ENCODE measurements at regions of chr17 and their contacts with region 1.

Region 1: GRCh38 chr17:8016632-8017478 is 14.4 kb downstream of the GUCY2D start:
- DNase-seq: peak; percentile 87
- H3K4me3 Mint-ChIP-seq: peak overlapping the region; percentile 51
- H3K27ac Mint-ChIP-seq: peak overlapping the region; percentile 95
- H3K4me1 Mint-ChIP-seq: peaks cover 44% of the 10 kb centered on the region
- H3K27me3 Mint-ChIP-seq: no peaks in the 10 kb centered on the region
- CTCF ChIP-seq: peak; percentile 90

Region 2: GRCh38 chr17:7915611-7916382 is 101.1 kb before region 1 on chr17 and contains the start of gene RNF227:
- CTCF ChIA-PET with region 1: interaction called, 4 read pairs
- POLR2A ChIA-PET with region 1: interaction called, 11 read pairs
- intact Hi-C with region 1: loop called (anchors 1 kb)
- DNase-seq: peak; percentile 97
- H3K4me3 Mint-ChIP-seq: peak within 1 kb of the TSS; percentile 93
- H3K27ac Mint-ChIP-seq: peak within 1 kb of the TSS; percentile 95
- H3K4me1 Mint-ChIP-seq: peaks cover 26% of the 10 kb centered on the region
- H3K27me3 Mint-ChIP-seq: no peaks in the 10 kb centered on the region
- CTCF ChIP-seq: no peak
- total RNA-seq, gene RNF227: 5.6 and 7.4 TPM in 2 replicates

Region 3: DNA sequence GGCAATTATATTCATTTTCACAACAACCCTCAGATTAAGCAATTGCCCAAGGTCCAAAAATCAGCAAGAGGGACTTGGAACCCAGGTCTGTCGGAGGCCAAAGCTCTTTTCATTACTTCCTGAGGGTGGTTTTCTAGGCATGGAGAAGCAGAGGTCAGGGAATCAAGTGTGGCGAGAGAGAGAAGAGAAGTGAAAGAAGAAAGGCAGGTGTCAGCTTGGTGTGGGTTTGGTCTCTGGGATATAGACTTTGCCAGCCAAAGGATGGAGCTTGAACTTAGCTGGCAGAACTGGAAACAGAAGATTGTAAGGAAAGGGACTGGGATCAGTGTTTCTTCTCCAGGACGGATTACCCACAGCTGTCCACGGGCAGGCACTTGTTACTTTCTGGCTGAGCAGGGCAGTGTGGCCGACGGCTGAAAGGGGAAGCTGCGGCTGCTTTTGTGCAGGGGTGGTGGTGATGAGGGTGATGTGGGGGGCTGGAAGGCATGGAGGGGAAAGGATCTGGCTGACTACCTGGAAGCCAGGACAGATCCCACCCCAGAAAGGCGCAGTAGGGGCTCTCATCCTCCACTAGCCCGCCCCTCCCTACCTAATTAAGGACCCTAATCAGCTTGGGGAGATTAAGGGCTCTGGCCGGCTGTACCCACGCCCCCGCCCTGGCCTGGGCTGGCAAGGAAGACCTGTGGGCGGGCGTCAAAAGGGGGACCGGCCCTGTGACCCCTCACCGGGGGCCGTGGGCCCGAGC is 14.7 kb before region 1 on chr17 and contains the start of gene GUCY2D:
- CTCF ChIA-PET with region 1: interaction called, 11 read pairs
- POLR2A ChIA-PET with region 1: interaction called, 5 read pairs
- intact Hi-C with region 1: no loop called
- DNase-seq: no peak
- H3K4me3 Mint-ChIP-seq: no peak within 1 kb of the TSS
- H3K27ac Mint-ChIP-seq: no peak within 1 kb of the TSS
- H3K4me1 Mint-ChIP-seq: peaks cover 16% of the 10 kb centered on the region
- H3K27me3 Mint-ChIP-seq: peaks cover 13% of the 10 kb centered on the region
- CTCF ChIP-seq: no peak
- total RNA-seq, gene GUCY2D: not detected in 2 replicates

Region 4: DNA sequence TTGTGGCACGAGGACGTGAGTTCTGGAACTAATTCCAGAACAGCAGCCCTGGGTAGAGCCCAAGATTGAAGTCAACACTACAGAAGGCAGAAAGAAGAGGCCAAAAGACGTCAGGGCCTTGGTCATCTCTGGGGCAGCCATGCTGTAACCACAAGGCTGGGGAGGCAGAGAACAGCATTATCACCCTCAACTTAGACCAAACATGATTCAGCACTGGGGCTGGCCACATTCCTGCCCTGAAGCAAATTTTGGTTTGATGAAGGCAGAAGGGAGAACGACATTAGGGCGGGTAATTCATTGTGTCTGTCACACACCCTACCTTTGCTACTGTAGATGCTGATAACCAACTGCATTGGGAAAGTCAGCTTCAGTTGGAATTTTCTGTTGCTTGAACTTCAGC is 12.3 kb after region 1 on chr17:
- CTCF ChIA-PET with region 1: interaction called, 35 read pairs
- POLR2A ChIA-PET with region 1: interaction called, 82 read pairs
- intact Hi-C with region 1: no loop called
- DNase-seq: peak; percentile 60
- H3K4me3 Mint-ChIP-seq: no peak overlapping the region
- H3K27ac Mint-ChIP-seq: peak overlapping the region; percentile 68
- H3K4me1 Mint-ChIP-seq: peaks cover 32% of the 10 kb centered on the region
- H3K27me3 Mint-ChIP-seq: no peaks in the 10 kb centered on the region
- CTCF ChIP-seq: no peak

Measured in MCF 10A (cell line).